AG04450 (cell line): ENCODE measurements at regions of chr9 and their contacts with region 1.

Region 1: DNA sequence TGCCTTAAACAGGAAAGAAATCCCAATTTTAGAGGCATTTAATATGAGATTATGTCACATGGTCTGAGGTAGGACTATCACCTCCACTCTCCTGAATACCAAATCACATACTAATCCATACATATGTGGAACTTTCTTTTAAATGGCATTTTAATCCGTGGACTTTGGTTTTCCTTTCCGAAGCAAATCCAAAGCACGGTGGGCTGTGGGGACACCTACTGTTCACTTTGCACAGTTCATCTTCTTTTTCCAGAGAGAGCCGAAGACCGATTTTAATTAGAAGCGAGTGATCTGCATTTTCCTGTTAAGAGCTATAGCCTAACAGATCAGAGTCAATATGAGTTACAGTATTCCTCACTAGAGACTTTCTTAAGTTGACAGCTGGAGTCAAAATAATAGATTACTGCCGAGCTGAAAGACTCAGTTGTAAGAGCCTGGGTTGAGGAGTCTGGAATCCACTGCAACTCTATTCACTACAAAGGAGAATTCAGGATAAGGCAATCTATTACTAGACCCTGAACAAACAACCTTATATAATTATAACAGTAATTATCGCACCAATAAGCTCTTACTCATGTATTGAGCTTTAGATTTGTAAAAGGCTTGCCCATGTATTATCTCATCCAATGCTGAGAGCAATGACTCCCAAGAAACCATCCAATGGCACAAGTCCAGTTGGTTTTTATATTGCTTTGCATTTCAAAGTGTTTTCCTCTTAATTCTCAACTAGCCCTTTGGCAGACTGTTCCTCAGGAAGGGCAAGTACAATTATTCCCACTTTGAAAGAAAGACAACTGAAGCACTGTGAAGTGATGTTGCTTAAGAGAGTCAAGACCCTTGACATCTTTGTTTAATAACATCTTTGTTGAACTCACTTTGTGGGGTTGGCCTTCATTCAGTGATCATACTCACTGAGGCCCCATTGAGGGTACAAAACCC is 144.7 kb downstream of the TRPM6 start:
- DNase-seq: peak; percentile 15
- H3K4me3 ChIP-seq: no peak overlapping the region
- H3K27ac ChIP-seq: no peak overlapping the region
- H3K27me3 ChIP-seq: peaks cover 7% of the 10 kb centered on the region
- CTCF ChIP-seq: peak; percentile 83

Region 2: GRCh38 chr9:74729136-74729695 is 13.8 kb before region 1 on chr9:
- CTCF ChIA-PET with region 1: interaction called, 10 read pairs
- POLR2A ChIA-PET with region 1: no interaction called
- DNase-seq: no peak
- H3K4me3 ChIP-seq: no peak overlapping the region
- H3K27ac ChIP-seq: no peak overlapping the region
- H3K27me3 ChIP-seq: no peaks in the 10 kb centered on the region
- CTCF ChIP-seq: no peak

Region 3: GRCh38 chr9:74760031-74760698 is 17.1 kb after region 1 on chr9:
- CTCF ChIA-PET with region 1: interaction called, 13 read pairs
- POLR2A ChIA-PET with region 1: no interaction called
- DNase-seq: peak; percentile 73
- H3K4me3 ChIP-seq: no peak overlapping the region
- H3K27ac ChIP-seq: no peak overlapping the region
- H3K27me3 ChIP-seq: no peaks in the 10 kb centered on the region
- CTCF ChIP-seq: no peak